ENCODE measurements at regions of chr2 and their contacts with region 1.

Region 1: GRCh38 chr2:74935975-74936391 is 22.5 kb upstream of the POLE4 start:
- DNase-seq: no peak
- H3K4me3 ChIP-seq: no peak overlapping the region
- H3K27ac ChIP-seq: no peak overlapping the region
- H3K4me1 ChIP-seq: no peaks in the 10 kb centered on the region
- H3K27me3 ChIP-seq: no peaks in the 10 kb centered on the region
- CTCF ChIP-seq: no peak

Region 2: GRCh38 chr2:74646201-74646600 is 289.8 kb before region 1 on chr2:
- CTCF ChIA-PET with region 1: no interaction called
- POLR2A ChIA-PET with region 1: interaction called, 15 read pairs
- intact Hi-C with region 1: no loop called
- DNase-seq: no peak
- H3K4me3 ChIP-seq: no peak overlapping the region
- H3K27ac ChIP-seq: no peak overlapping the region
- H3K4me1 ChIP-seq: no peaks in the 10 kb centered on the region
- H3K27me3 ChIP-seq: no peaks in the 10 kb centered on the region
- CTCF ChIP-seq: no peak